MCF 10A (cell line): ENCODE measurements at regions of chr20 and their contacts with region 1.

Region 1: GRCh38 chr20:54207743-54208547 is at the start of gene PFDN4:
- DNase-seq: peak; percentile 85
- H3K4me3 Mint-ChIP-seq: peak within 1 kb of the TSS; percentile 76
- H3K27ac Mint-ChIP-seq: peak within 1 kb of the TSS; percentile 100
- H3K4me1 Mint-ChIP-seq: peaks cover 16% of the 10 kb centered on the region
- H3K27me3 Mint-ChIP-seq: no peaks in the 10 kb centered on the region
- CTCF ChIP-seq: peak; percentile 73
- total RNA-seq, gene PFDN4: 37.0 and 45.4 TPM in 2 replicates

Region 2: DNA sequence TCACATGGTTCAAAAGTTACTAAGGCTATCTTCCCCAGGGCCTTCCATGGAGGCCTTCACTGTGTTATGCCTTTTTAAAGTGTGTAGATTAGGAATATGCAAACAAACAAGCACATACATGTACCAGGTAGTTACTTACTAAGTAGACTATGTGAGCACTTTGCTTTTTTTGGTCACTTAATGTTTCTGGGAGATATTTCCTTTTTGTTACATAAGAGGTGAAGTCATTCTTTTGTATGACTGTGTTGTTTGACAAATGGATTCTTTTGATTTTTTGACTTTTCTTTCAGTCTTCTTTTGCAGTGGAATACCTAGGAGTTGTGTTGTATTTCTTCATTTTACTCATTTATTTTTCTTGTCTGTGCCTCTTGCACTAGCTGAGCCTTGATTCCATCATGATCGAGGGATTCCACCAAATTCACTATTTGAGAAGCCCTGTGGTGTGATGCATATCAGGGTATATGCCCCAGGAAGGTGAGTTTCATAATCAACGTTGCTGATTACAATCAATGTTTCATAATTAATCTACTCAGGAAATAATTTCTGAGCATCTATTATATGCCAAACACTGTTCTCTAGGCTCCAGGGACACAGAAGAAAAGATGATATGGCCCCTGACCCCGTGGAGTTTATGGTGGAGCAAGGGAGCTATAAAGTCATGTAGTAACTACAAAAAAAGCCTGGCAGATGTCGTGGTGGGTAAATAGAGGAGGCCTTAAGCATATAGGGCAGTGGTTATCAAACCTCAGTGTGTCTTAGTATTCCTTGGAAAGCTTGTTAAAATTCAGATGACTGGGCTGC is 97.7 kb before region 1 on chr20:
- CTCF ChIA-PET with region 1: interaction called, 1,436 read pairs
- POLR2A ChIA-PET with region 1: interaction called, 27 read pairs
- intact Hi-C with region 1: no loop called
- DNase-seq: no peak
- H3K4me3 Mint-ChIP-seq: no peak overlapping the region
- H3K27ac Mint-ChIP-seq: no peak overlapping the region
- H3K4me1 Mint-ChIP-seq: peaks cover 25% of the 10 kb centered on the region
- H3K27me3 Mint-ChIP-seq: no peaks in the 10 kb centered on the region
- CTCF ChIP-seq: no peak

Region 3: GRCh38 chr20:54140927-54141566 is 66.9 kb before region 1 on chr20:
- CTCF ChIA-PET with region 1: interaction called, 15 read pairs
- POLR2A ChIA-PET with region 1: no interaction called
- intact Hi-C with region 1: no loop called
- DNase-seq: peak; percentile 50
- H3K4me3 Mint-ChIP-seq: no peak overlapping the region
- H3K27ac Mint-ChIP-seq: peak overlapping the region; percentile 42
- H3K4me1 Mint-ChIP-seq: peaks cover 9% of the 10 kb centered on the region
- H3K27me3 Mint-ChIP-seq: no peaks in the 10 kb centered on the region
- CTCF ChIP-seq: no peak

Region 4: DNA sequence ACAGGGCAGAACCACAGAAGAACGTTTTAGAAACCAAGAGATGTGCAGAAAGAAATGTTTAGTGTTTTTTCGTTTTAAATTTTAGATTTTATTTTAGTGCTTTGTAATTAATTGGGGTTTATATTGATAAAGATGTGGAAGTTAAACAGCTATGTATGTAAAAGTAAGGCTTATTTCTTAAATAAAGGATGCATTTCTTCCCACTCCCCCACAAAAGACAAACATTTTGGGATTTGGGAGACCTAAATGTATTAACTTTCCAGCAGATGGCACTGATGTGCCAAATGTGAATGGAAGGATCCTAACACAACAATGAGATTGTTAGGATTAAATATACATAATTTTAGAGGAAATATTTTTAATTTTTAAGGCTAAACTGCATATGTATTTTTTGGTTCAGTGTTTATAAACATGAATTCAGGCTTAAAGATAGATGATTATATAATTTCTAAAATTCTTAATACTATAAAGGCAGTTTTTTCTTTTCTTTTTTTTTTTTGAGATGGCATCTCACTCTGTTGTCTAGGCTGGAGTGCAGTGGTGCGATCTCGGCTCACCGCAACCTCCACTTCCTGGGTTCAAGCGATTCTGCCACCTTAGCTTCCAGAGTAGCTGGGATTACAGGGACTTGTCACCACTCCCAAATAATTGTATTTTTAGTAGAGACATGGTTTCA is 11.9 kb after region 1 on chr20:
- CTCF ChIA-PET with region 1: interaction called, 16 read pairs
- POLR2A ChIA-PET with region 1: interaction called, 18 read pairs
- intact Hi-C with region 1: no loop called
- DNase-seq: peak; percentile 65
- H3K4me3 Mint-ChIP-seq: no peak overlapping the region
- H3K27ac Mint-ChIP-seq: no peak overlapping the region
- H3K4me1 Mint-ChIP-seq: peaks cover 10% of the 10 kb centered on the region
- H3K27me3 Mint-ChIP-seq: no peaks in the 10 kb centered on the region
- CTCF ChIP-seq: peak; percentile 57

Region 5: DNA sequence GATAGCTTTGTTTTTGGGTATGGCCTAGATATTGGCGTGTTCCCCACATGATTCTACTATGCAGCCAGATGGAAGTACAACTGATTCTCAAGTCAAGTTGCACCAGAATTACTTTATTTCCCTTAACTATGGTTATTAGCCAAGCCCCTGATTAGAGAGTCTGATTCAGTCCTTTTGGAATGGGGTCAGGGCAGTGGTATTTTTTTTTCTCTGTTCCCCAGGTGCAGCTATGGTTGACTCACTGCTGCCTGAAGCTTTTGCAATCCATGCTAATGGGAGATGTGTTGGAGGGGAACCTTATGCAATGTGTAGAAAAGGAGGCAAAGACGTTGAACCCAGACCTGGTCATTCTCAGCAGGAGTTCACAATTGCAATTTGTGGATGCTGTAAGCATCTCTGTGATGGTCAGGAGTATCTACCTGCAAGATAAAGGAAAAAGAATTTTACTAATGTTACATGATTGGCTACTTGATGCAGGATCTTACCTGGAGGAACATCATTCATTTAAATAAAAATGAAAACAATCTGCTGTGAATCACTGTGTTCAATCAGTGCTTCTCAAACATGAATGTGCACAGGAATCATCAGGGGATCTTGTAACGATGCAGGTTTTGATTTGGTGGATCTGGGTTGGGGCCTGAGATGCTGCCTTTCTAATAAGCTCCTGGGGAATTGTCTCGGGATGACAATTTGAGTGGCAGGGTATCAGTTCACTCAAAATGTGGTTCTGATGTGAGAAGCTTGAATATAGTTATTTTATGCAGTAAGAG is 49.3 kb after region 1 on chr20:
- CTCF ChIA-PET with region 1: interaction called, 6 read pairs
- POLR2A ChIA-PET with region 1: interaction called, 14 read pairs
- intact Hi-C with region 1: no loop called
- DNase-seq: peak; percentile 89
- H3K4me3 Mint-ChIP-seq: no peak overlapping the region
- H3K27ac Mint-ChIP-seq: no peak overlapping the region
- H3K4me1 Mint-ChIP-seq: peaks cover 32% of the 10 kb centered on the region
- H3K27me3 Mint-ChIP-seq: no peaks in the 10 kb centered on the region
- CTCF ChIP-seq: no peak

Region 6: DNA sequence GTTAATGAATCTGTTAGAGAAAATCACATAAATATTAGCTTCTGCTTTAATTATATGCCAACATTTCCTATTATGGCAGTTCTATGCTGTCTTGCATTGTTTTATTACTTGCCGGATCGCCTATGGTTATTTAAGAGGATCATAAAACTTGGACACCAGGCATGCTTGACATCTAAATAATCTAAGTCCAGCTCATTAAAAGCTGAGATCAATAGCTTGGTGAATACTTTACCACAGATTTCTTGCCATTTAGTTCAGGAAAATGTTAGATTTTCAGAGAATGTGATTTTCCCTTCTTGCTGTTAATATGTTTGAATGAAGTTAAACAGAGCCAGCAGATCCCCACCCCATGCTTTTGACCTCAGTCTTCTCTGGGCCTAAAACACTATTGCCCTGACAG is 118.7 kb after region 1 on chr20:
- CTCF ChIA-PET with region 1: no interaction called
- POLR2A ChIA-PET with region 1: no interaction called
- intact Hi-C with region 1: no loop called
- DNase-seq: no peak
- H3K4me3 Mint-ChIP-seq: no peak overlapping the region
- H3K27ac Mint-ChIP-seq: no peak overlapping the region
- H3K4me1 Mint-ChIP-seq: no peaks in the 10 kb centered on the region
- H3K27me3 Mint-ChIP-seq: no peaks in the 10 kb centered on the region
- CTCF ChIP-seq: no peak

Region 7: DNA sequence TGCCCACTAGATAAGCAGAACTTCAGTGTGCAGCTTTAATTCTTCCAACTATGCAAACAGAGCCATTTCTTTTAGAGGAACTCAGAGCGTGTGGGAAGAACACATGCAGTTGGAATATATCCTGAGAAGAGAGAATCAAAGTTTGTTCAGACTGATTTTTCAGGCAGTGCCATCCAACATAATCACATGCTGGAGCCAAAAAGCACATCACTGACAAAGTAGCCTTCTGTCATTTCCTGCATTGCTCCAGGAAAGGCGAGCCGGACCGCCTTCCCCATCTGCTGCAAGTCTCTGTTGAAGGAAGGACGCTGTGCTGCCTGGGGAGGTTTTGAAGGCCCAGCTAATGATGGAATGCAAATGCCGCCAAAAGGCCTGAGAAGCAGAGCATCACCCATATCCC is 365.9 kb after region 1 on chr20:
- CTCF ChIA-PET with region 1: no interaction called
- POLR2A ChIA-PET with region 1: no interaction called
- intact Hi-C with region 1: no loop called
- DNase-seq: no peak
- H3K4me3 Mint-ChIP-seq: no peak overlapping the region
- H3K27ac Mint-ChIP-seq: no peak overlapping the region
- H3K4me1 Mint-ChIP-seq: no peaks in the 10 kb centered on the region
- H3K27me3 Mint-ChIP-seq: peaks cover 63% of the 10 kb centered on the region
- CTCF ChIP-seq: no peak

Region 8: DNA sequence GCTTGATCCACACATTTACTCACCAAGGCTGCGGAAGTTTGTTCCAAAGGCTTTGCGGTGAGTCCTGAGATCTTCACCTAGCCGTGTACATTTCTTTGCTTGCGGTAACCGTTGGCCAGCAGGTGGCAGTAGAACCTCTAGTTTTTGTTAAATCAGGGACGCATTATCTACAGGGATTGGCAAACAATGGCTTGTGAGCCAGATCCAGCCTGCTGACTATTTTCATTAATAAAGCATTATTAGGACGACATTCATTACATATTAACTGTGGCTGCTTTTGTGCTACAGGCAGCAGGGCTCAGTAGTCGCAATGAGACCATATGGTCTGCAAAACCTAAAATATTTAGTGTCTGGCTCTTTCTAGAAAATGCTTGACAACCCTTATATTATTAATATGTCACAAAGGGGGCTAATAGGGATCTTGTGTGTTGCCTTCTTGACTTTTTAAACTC is 441.6 kb after region 1 on chr20:
- CTCF ChIA-PET with region 1: interaction called, 180 read pairs
- POLR2A ChIA-PET with region 1: no interaction called
- intact Hi-C with region 1: no loop called
- DNase-seq: peak; percentile 82
- H3K4me3 Mint-ChIP-seq: no peak overlapping the region
- H3K27ac Mint-ChIP-seq: no peak overlapping the region
- H3K4me1 Mint-ChIP-seq: no peaks in the 10 kb centered on the region
- H3K27me3 Mint-ChIP-seq: peaks cover 39% of the 10 kb centered on the region
- CTCF ChIP-seq: peak; percentile 71